ENCODE measurements at regions of chr9 and their contacts with region 1.

Region 1: GRCh38 chr9:17219261-17219660 is 84.4 kb downstream of the CNTLN start:
- DNase-seq: no peak
- H3K4me3 Mint-ChIP-seq: no peak overlapping the region
- H3K27ac Mint-ChIP-seq: no peak overlapping the region
- H3K4me1 Mint-ChIP-seq: no peaks in the 10 kb centered on the region
- H3K27me3 Mint-ChIP-seq: no peaks in the 10 kb centered on the region
- CTCF ChIP-seq: no peak

Region 2: GRCh38 chr9:16884952-16885513 is 334.2 kb before region 1 on chr9:
- CTCF ChIA-PET with region 1: no interaction called
- intact Hi-C with region 1: no loop called
- DNase-seq: no peak
- H3K4me3 Mint-ChIP-seq: no peak overlapping the region
- H3K27ac Mint-ChIP-seq: no peak overlapping the region
- H3K4me1 Mint-ChIP-seq: no peaks in the 10 kb centered on the region
- H3K27me3 Mint-ChIP-seq: no peaks in the 10 kb centered on the region
- CTCF ChIP-seq: no peak

Region 3: GRCh38 chr9:17402309-17402708 is 183.0 kb after region 1 on chr9:
- CTCF ChIA-PET with region 1: interaction called, 4 read pairs
- intact Hi-C with region 1: loop called (anchors 2 kb)
- DNase-seq: no peak
- H3K4me3 Mint-ChIP-seq: no peak overlapping the region
- H3K27ac Mint-ChIP-seq: no peak overlapping the region
- H3K4me1 Mint-ChIP-seq: no peaks in the 10 kb centered on the region
- H3K27me3 Mint-ChIP-seq: no peaks in the 10 kb centered on the region
- CTCF ChIP-seq: no peak

Region 4: GRCh38 chr9:17436854-17437253 is 217.6 kb after region 1 on chr9:
- CTCF ChIA-PET with region 1: no interaction called
- intact Hi-C with region 1: no loop called
- DNase-seq: no peak
- H3K4me3 Mint-ChIP-seq: no peak overlapping the region
- H3K27ac Mint-ChIP-seq: no peak overlapping the region
- H3K4me1 Mint-ChIP-seq: no peaks in the 10 kb centered on the region
- H3K27me3 Mint-ChIP-seq: no peaks in the 10 kb centered on the region
- CTCF ChIP-seq: no peak

Measured in Calu3 (cell line).